ENCODE measurements at regions of chr7 and their contacts with region 1.

Region 1: DNA sequence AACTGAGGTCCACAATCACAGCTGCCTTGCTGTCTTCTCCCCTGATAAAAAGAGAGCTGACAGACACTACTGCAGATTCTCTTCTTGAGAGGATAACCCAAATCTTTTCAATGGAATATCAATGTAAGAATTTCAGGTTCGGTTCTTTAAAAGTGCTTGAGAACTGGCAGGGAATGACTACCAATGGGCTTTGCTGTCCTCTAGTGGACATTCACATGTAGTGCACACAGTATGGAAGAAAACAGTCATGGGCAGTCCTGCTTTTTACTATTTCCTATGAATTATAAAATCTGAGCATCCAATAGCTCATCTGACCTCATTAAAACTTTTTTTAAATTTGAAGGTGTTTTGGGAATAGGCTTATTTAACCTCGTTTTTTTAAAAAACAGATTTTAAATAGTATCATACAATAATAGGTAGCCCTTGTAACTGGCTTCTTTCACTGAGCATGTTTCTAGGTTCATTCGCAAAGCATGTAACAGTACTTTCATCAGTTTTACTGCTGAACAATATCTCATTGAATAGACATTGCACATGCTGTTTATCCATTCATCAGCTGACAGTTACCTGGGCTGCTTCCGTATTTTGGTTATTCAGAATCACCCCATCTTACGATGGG is 18.3 kb downstream of the FZD9 start:
- DNase-seq: peak; percentile 61 to 65
- ATAC-seq: peak; percentile 75 to 78
- H3K4me3 ChIP-seq: no peak overlapping the region
- H3K27ac ChIP-seq: no peak overlapping the region
- H3K4me1 ChIP-seq: no peaks in the 10 kb centered on the region
- CTCF ChIP-seq: peak; percentile 99
- EP300 ChIP-seq: no peak
- POLR2A ChIP-seq: no peak
- RAD21 ChIP-seq: peak; percentile 91

Region 2: DNA sequence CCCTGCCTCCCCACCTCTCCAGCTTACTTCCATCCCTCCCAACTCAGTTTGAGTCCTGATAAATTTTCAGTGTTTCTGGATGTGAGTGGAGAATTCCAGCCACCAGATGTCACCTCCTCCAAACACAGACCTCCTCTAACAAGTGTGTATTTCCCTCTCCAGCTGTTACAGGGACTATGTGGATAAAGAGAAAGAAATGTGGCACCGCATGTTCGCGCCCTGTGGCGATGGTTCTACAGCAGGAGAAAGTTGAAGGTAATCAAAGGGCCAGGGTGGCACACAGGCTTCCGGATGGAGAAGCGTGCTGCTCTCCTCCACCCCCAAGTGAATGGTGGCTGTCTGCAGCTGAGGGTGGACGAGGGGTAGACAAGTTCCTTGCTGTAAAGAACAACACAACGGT is 109.2 kb before region 1 on chr7:
- CTCF ChIA-PET with region 1: interaction called, 57 read pairs
- POLR2A ChIA-PET with region 1: no interaction called
- DNase-seq: peak; percentile 46 to 67
- ATAC-seq: peak; percentile 87 to 89
- H3K4me3 ChIP-seq: no peak overlapping the region
- H3K27ac ChIP-seq: no peak overlapping the region
- H3K4me1 ChIP-seq: peaks cover 8% of the 10 kb centered on the region; the same call in 2 of the 3 replicates
- CTCF ChIP-seq: peak; percentile 66
- EP300 ChIP-seq: no peak
- POLR2A ChIP-seq: no peak
- RAD21 ChIP-seq: peak; percentile 56 to 61

Region 3: DNA sequence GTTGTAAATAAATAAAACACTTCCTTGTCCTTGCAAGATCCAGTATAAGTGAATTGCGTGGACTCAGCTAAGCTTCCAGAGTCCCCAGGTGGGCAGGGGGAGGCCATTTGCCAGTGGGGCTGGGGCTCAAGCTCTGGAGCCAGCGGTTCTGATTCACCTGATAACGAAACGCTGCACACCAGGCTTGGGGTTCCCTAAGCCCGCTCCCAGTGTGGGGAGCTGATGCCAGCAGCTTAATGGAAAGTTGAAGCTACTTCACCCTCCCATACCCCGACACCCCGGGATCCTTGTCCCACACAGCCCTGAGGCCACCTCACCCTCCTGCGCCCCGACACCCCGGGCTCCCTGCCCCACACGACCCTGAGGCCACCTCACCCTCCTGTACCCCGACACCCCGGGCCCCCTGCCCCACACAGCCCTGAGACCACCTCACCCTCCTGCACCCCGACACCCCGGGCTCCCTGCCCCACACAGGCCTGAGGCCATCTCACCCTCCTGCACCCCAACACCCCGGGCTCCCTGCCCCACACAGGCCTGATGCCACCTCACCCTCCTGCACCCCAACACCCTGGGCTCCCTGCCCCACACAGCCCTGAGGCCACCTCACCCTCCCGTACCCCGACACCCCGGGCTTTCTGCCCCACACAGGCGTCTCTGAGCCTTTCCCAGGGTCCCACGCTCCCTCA is 93.2 kb before region 1 on chr7:
- CTCF ChIA-PET with region 1: interaction called, 16 read pairs
- POLR2A ChIA-PET with region 1: no interaction called
- DNase-seq: no peak
- ATAC-seq: peak in 1 of 2 experiments; percentile 36; a peak in 3 of 6 replicates
- H3K4me3 ChIP-seq: peak overlapping the region; percentile 29; the same call in 1 of the 3 replicates
- H3K27ac ChIP-seq: peak overlapping the region; percentile 34 to 59; a peak in 5 of 6 replicates
- H3K4me1 ChIP-seq: peaks cover 9% of the 10 kb centered on the region
- CTCF ChIP-seq: no peak
- EP300 ChIP-seq: no peak
- POLR2A ChIP-seq: no peak
- RAD21 ChIP-seq: no peak

Region 4: DNA sequence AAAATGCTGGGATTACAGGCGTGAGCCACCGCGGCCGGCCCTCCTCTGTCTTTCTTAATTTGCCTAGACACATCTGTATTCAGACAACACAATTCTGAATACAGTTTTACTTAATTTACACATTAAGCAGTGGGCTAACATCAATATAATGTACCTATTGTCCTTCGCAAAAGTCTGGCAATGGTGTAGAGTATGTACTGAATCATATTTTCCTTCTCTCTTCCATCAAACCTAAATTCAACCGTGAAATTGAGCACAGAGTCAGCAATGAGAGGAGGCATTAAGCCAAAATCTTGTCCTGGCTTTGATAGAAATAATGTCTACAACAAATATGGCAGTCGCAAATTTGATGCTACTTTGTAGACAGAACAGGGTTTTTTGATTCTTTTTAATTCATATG is 12.1 kb after region 1 on chr7:
- CTCF ChIA-PET with region 1: interaction called, 23 read pairs
- POLR2A ChIA-PET with region 1: no interaction called
- DNase-seq: no peak
- ATAC-seq: no peak
- H3K4me3 ChIP-seq: no peak overlapping the region
- H3K27ac ChIP-seq: no peak overlapping the region
- H3K4me1 ChIP-seq: no peaks in the 10 kb centered on the region
- CTCF ChIP-seq: no peak
- EP300 ChIP-seq: no peak
- POLR2A ChIP-seq: no peak
- RAD21 ChIP-seq: no peak

Region 5: DNA sequence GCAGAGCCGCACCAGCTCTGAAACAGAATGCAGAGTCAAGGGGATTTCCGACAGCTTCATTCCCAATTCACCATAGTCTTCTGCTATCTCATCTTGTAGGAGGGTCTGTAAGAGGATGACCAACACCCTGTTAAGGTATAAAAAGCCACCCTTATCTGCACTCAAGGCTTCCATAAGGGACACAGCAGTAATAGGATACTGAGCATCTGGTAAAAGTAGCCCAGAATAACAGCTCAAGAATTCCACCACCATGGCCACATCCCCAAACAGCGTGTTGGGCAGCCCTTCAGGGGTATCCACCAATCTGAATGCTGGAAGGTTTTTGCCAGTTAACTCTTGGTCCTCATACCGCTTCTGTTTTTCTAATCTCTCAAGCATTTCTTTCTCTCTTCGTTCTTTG is 25.5 kb after region 1 on chr7:
- CTCF ChIA-PET with region 1: interaction called, 10 read pairs
- POLR2A ChIA-PET with region 1: no interaction called
- DNase-seq: no peak
- ATAC-seq: no peak
- H3K4me3 ChIP-seq: no peak overlapping the region
- H3K27ac ChIP-seq: no peak overlapping the region
- H3K4me1 ChIP-seq: no peaks in the 10 kb centered on the region
- CTCF ChIP-seq: no peak
- EP300 ChIP-seq: no peak
- POLR2A ChIP-seq: no peak
- RAD21 ChIP-seq: no peak

Region 6: GRCh38 chr7:73578342-73579127 is 126.6 kb after region 1 on chr7 and contains the start of gene TBL2:
- CTCF ChIA-PET with region 1: no interaction called
- POLR2A ChIA-PET with region 1: no interaction called
- DNase-seq: peak; percentile 99
- ATAC-seq: peak; percentile 94 to 96
- H3K4me3 ChIP-seq: peak within 1 kb of the TSS; percentile 82
- H3K27ac ChIP-seq: peak within 1 kb of the TSS; percentile 92 to 98
- H3K4me1 ChIP-seq: peaks cover 21% of the 10 kb centered on the region
- CTCF ChIP-seq: no peak; the same call in 2 of the 3 replicates
- EP300 ChIP-seq: no peak
- POLR2A ChIP-seq: peak; percentile 96
- RAD21 ChIP-seq: no peak
- polyA plus RNA-seq, gene TBL2: 34.4 and 38.3 TPM in 2 replicates

Measured in A549 (cell line).